Endothelial cell of umbilical vein (primary cell): ENCODE measurements at regions of chr7 and their contacts with region 1.

Region 1: DNA sequence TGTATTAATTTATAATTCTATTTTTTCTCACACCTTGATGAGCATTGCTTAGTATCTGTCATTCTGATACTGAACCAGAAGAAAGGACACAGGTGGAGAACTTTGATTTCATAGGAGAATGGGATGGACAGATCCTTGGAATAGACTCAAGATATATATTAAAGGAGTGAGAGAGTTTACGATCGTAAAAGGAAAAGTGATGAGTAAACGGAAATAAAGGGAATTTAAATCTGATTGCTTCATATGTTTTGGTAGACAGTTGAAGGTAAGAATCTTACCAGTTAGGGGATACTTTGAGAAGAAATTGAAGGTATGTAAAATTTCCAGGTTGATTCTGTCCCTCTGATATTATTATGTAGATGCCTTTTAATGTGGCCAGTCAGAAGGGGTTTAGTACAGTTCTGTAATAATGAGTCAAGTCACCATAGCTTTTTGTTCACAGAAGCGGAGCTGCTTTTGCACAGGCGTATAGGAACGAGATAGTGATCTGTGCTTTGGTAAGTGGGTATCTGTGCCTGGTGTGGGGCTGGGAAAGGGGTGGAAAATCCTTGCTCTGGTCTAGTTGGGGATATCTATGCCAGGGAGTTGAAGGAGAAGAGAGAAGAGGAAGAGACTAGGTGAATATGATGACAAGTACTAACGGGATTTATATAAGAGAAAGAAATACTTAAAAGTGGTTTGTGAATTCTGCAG is 15.4 kb downstream of the SP4 start:
- DNase-seq: no peak
- H3K4me3 ChIP-seq: no peak overlapping the region
- H3K27ac ChIP-seq: no peak overlapping the region
- H3K4me1 ChIP-seq: no peaks in the 10 kb centered on the region
- H3K27me3 ChIP-seq: no peaks in the 10 kb centered on the region
- CTCF ChIP-seq: no peak
- POLR2A ChIP-seq: no peak

Region 2: GRCh38 chr7:20870977-20871376 is 572.3 kb before region 1 on chr7:
- CTCF ChIA-PET with region 1: no interaction called
- POLR2A ChIA-PET with region 1: no interaction called
- dilution Hi-C with region 1: no loop called
- intact Hi-C with region 1: no loop called
- DNase-seq: no peak
- H3K4me3 ChIP-seq: no peak overlapping the region
- H3K27ac ChIP-seq: no peak overlapping the region
- H3K4me1 ChIP-seq: no peaks in the 10 kb centered on the region
- H3K27me3 ChIP-seq: no peaks in the 10 kb centered on the region
- CTCF ChIP-seq: no peak
- POLR2A ChIP-seq: no peak

Region 3: GRCh38 chr7:21462081-21462480 is 18.8 kb after region 1 on chr7:
- CTCF ChIA-PET with region 1: interaction called, 3 read pairs
- POLR2A ChIA-PET with region 1: no interaction called
- dilution Hi-C with region 1: no loop called
- intact Hi-C with region 1: loop called (anchors 2 kb)
- DNase-seq: no peak
- H3K4me3 ChIP-seq: no peak overlapping the region
- H3K27ac ChIP-seq: no peak overlapping the region
- H3K4me1 ChIP-seq: no peaks in the 10 kb centered on the region
- H3K27me3 ChIP-seq: no peaks in the 10 kb centered on the region
- CTCF ChIP-seq: no peak
- POLR2A ChIP-seq: no peak

Region 4: DNA sequence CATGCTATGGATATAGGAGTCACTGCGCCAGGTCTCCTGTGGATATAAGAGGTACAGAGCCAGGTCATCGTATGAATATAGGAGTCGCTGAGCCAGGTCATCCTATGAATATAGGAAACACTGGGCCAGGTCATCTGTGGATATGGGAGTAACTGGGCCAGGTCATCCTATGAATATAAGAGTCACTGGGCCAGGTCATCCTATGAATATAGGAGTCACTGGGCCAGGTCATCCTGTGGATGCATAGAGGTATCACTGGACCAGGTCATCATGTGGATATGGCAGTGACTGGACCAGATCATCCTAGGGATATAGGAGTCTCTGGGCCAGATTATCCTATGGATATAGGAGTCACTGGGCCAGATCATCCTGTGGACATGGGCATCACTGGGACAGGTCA is 281.3 kb after region 1 on chr7:
- CTCF ChIA-PET with region 1: no interaction called
- POLR2A ChIA-PET with region 1: no interaction called
- dilution Hi-C with region 1: no loop called
- intact Hi-C with region 1: no loop called
- DNase-seq: no peak
- H3K4me3 ChIP-seq: no peak overlapping the region
- H3K27ac ChIP-seq: no peak overlapping the region
- H3K4me1 ChIP-seq: no peaks in the 10 kb centered on the region
- H3K27me3 ChIP-seq: no peaks in the 10 kb centered on the region
- CTCF ChIP-seq: no peak
- POLR2A ChIP-seq: no peak

Region 5: DNA sequence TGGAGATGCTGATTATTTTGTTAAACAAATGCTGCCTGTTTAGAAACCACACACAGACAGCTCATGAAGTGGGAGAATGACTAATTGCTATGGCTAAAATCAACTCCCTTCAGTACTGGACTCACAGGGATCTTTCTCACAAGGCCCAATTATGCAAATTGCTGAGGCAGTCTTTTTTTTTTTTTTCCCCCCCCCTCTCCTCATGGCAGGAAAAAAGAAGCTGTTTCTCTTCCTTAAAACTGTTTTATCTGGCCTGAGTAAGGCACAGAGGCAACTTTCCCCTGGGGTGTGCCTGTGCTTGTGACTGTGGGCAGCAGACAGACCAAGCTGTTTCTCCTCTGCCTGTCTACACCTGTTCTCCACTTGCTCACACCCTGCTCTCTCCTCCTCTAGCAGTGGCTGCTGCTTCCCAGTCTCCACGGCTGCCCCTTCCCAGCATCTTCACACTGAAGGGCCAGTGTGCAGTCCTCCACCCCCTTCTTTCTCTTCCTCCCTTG is 1122.1 kb after region 1 on chr7:
- CTCF ChIA-PET with region 1: no interaction called
- POLR2A ChIA-PET with region 1: no interaction called
- dilution Hi-C with region 1: no loop called
- intact Hi-C with region 1: no loop called
- DNase-seq: peak; percentile 69
- H3K4me3 ChIP-seq: peak overlapping the region in 1 of 3 experiments; percentile 70
- H3K27ac ChIP-seq: peak overlapping the region; percentile 99
- H3K4me1 ChIP-seq: peaks cover 72% of the 10 kb centered on the region
- H3K27me3 ChIP-seq: no peaks in the 10 kb centered on the region
- CTCF ChIP-seq: no peak
- POLR2A ChIP-seq: peak; percentile 41